ENCODE measurements at regions of chr15 and their contacts with region 1.

Region 1: DNA sequence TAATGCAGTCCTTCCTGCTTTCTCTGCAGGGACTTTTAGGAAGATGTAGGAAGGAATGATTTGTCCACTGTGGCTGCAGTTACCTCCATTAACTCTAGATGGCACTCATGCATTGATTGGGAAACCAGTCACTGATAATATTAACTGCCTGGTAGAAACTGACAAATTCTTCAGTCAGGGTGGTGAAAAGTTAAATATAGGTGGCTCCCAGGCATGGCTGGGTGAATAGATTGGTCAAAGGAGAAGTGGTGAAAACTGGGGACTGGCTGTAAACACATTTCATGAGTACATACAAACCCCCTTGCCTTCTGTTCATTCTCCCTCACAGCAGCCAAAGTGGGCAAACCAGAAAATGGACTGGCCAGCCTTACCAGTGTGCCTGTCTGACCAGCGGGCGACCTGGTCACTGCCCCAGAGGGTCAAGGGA is 333.4 kb downstream of the THSD4 start:
- DNase-seq: peak; percentile 57
- ATAC-seq: peak; percentile 56; the same call in 1 of the 2 replicates
- H3K4me3 ChIP-seq: no peak overlapping the region
- H3K27ac ChIP-seq: no peak overlapping the region; the same call in 1 of the 2 replicates
- H3K4me1 ChIP-seq: peaks cover 13% of the 10 kb centered on the region
- H3K27me3 ChIP-seq: no peaks in the 10 kb centered on the region
- CTCF ChIP-seq: peak; percentile 90

Region 2: DNA sequence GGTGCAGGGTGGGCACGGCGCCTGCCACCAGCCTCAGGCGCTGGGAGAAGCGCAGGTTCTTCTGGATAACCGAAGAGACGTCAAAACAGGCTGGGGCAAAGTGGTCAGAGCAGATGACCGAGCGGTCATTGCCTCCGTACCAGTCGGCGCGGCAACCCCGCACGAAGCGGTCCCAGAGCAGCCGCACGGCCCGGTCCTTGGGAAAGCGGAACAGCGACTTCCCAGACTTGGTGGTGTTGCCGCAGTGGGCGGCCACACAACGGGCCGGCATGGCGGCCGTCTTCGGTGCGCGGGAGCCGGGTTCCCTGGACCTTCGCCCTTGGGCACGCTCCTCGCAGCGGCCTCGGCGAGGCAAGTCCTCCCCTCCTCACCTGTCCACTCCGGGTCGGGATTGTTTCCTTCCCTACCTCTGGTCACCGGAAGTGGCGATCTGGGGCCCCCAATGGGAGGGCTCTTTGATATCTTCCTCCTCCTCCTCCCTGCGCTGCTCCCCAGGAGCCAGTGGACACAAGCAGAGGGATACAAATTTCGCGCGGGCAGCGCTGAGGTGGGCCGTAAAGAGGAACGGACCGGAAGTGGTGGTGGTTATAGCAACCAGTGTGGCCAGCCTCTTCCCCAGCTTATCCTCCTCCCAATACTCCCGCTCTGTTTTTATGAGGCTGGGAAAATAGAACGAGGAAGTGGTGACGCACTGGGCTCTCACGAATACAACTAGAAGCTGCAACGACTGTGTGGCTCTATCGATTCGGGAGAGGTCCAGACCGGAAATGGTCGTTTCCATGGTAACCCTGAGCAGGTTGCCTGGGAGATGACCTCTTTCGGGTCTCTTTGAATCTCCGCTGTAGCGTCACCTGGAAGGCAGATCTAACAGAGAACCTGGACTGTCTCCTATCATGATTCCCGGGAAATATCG is 556.4 kb before region 1 on chr15 and contains the starts of genes LRRC49 and THAP10:
- CTCF ChIA-PET with region 1: no interaction called
- POLR2A ChIA-PET with region 1: no interaction called
- in situ Hi-C with region 1: no loop called
- intact Hi-C with region 1: loop called (anchors 10 kb)
- DNase-seq: peak; percentile 96
- ATAC-seq: peak; percentile 99
- H3K4me3 ChIP-seq: peak within 1 kb of the TSS; percentile 77 to 84
- H3K27ac ChIP-seq: peak within 1 kb of the TSS; percentile 83
- H3K4me1 ChIP-seq: peaks cover 14% of the 10 kb centered on the region
- H3K27me3 ChIP-seq: no peaks in the 10 kb centered on the region
- CTCF ChIP-seq: no peak
- total RNA-seq, gene LRRC49: 8.3 TPM
- total RNA-seq, gene THAP10: 6.7 TPM

Region 3: DNA sequence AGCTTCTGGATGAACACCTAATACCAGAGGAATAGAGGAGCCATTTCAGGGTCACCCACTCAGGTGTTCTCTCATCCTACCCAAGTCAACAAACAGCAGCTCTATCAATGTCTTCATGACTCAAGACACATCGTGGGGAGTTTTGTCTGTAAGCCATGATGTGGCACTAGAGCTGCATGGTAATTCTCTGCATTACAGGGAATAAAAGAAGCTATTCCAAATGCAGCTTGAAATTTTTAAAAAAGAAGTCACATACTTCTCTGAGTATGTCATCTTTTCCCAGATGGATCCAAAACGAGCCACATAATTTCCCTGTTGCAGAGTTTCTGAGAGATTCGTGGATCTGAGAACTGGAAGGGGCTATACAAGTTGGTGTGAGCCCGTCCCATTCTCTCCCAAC is 339.6 kb before region 1 on chr15:
- CTCF ChIA-PET with region 1: no interaction called
- POLR2A ChIA-PET with region 1: no interaction called
- in situ Hi-C with region 1: no loop called
- intact Hi-C with region 1: no loop called
- DNase-seq: no peak
- ATAC-seq: no peak
- H3K4me3 ChIP-seq: no peak overlapping the region
- H3K27ac ChIP-seq: peak overlapping the region; percentile 82; the same call in 1 of the 2 replicates
- H3K4me1 ChIP-seq: peaks cover 41% of the 10 kb centered on the region
- H3K27me3 ChIP-seq: no peaks in the 10 kb centered on the region
- CTCF ChIP-seq: peak; percentile 31

Region 4: GRCh38 chr15:71430782-71431181 is 17.9 kb before region 1 on chr15:
- CTCF ChIA-PET with region 1: no interaction called
- POLR2A ChIA-PET with region 1: interaction called, 14 read pairs
- in situ Hi-C with region 1: no loop called
- intact Hi-C with region 1: no loop called
- DNase-seq: no peak
- ATAC-seq: no peak
- H3K4me3 ChIP-seq: no peak overlapping the region
- H3K27ac ChIP-seq: peak overlapping the region; percentile 13; the same call in 1 of the 2 replicates
- H3K4me1 ChIP-seq: no peaks in the 10 kb centered on the region
- H3K27me3 ChIP-seq: no peaks in the 10 kb centered on the region
- CTCF ChIP-seq: no peak

Region 5: GRCh38 chr15:71730277-71731144 is 281.8 kb after region 1 on chr15:
- CTCF ChIA-PET with region 1: no interaction called
- POLR2A ChIA-PET with region 1: no interaction called
- in situ Hi-C with region 1: no loop called
- intact Hi-C with region 1: loop called (anchors 2 kb)
- DNase-seq: no peak
- ATAC-seq: peak; percentile 94
- H3K4me3 ChIP-seq: no peak overlapping the region
- H3K27ac ChIP-seq: no peak overlapping the region
- H3K4me1 ChIP-seq: no peaks in the 10 kb centered on the region
- H3K27me3 ChIP-seq: no peaks in the 10 kb centered on the region
- CTCF ChIP-seq: peak; percentile 90

Region 6: GRCh38 chr15:72278737-72279136 is 830.0 kb after region 1 on chr15:
- CTCF ChIA-PET with region 1: interaction called, 14 read pairs
- POLR2A ChIA-PET with region 1: no interaction called
- in situ Hi-C with region 1: no loop called
- intact Hi-C with region 1: no loop called
- DNase-seq: no peak
- ATAC-seq: no peak
- H3K4me3 ChIP-seq: no peak overlapping the region
- H3K27ac ChIP-seq: no peak overlapping the region
- H3K4me1 ChIP-seq: no peaks in the 10 kb centered on the region
- H3K27me3 ChIP-seq: no peaks in the 10 kb centered on the region
- CTCF ChIP-seq: no peak

Measured in Panc1 (cell line).